Activated CD4-positive, alpha-beta T cell treated with anti-CD3 and anti-CD28 coated beads, Interleukin-2, amount 10 ng/mL, durations not matched to agents 7 days and 5 days (primary cell): ENCODE measurements at regions of chr2 and their contacts with region 1.

Region 1: DNA sequence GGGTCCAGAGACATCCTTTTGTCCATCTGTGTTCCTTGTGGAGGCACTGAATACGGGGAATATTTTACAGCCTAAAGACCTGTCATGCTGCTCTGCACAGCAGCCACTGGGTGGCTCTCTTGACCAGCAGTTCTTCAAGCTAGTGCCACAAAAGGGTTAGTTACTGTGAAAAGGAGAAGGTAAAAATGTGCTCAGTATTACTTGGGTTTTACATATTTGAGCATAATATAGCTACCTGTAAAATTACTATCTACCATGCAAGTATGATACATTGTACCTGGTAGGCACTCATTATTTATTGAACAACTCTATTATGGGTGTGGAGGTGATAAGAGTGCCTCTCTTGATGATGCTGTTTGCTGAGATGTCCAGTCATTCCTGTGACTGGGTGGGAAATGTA is 23.6 kb downstream of the FZD5 start:
- DNase-seq: peak; percentile 67
- H3K4me3 Mint-ChIP-seq: no peak overlapping the region
- H3K27ac Mint-ChIP-seq: no peak overlapping the region
- H3K4me1 Mint-ChIP-seq: peaks cover 1% of the 10 kb centered on the region
- H3K27me3 Mint-ChIP-seq: no peaks in the 10 kb centered on the region

Region 2: DNA sequence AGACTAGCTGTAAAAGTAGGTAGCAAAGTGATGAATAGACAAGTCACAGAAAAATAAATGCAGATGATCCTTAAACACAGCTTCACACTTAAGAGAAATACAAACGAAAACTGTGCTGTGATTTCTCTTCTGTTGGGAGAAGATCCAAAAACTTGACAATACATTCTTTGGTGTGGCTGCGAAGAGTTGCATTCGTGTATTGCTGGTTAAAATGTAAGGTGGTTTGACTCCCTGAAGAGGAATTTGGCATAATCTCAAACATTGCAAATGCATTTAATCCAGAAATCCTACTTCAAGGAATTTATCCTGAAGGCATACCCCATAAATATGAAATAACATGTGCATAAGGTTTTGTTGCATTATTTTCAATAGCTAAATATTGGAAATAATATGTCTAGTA is 27.6 kb before region 1 on chr2:
- CTCF ChIA-PET with region 1: no interaction called
- POLR2A ChIA-PET with region 1: no interaction called
- DNase-seq: no peak
- H3K4me3 Mint-ChIP-seq: no peak overlapping the region
- H3K27ac Mint-ChIP-seq: no peak overlapping the region
- H3K4me1 Mint-ChIP-seq: peaks cover 9% of the 10 kb centered on the region
- H3K27me3 Mint-ChIP-seq: no peaks in the 10 kb centered on the region

Region 3: GRCh38 chr2:207833251-207833751 is 87.2 kb after region 1 on chr2:
- CTCF ChIA-PET with region 1: no interaction called
- POLR2A ChIA-PET with region 1: no interaction called
- DNase-seq: no peak
- H3K4me3 Mint-ChIP-seq: no peak overlapping the region
- H3K27ac Mint-ChIP-seq: no peak overlapping the region
- H3K4me1 Mint-ChIP-seq: peaks cover 28% of the 10 kb centered on the region
- H3K27me3 Mint-ChIP-seq: no peaks in the 10 kb centered on the region

Region 4: GRCh38 chr2:207847807-207848544 is 101.8 kb after region 1 on chr2:
- CTCF ChIA-PET with region 1: no interaction called
- POLR2A ChIA-PET with region 1: no interaction called
- DNase-seq: no peak
- H3K4me3 Mint-ChIP-seq: no peak overlapping the region
- H3K27ac Mint-ChIP-seq: no peak overlapping the region
- H3K4me1 Mint-ChIP-seq: peaks cover 8% of the 10 kb centered on the region
- H3K27me3 Mint-ChIP-seq: no peaks in the 10 kb centered on the region

Region 5: DNA sequence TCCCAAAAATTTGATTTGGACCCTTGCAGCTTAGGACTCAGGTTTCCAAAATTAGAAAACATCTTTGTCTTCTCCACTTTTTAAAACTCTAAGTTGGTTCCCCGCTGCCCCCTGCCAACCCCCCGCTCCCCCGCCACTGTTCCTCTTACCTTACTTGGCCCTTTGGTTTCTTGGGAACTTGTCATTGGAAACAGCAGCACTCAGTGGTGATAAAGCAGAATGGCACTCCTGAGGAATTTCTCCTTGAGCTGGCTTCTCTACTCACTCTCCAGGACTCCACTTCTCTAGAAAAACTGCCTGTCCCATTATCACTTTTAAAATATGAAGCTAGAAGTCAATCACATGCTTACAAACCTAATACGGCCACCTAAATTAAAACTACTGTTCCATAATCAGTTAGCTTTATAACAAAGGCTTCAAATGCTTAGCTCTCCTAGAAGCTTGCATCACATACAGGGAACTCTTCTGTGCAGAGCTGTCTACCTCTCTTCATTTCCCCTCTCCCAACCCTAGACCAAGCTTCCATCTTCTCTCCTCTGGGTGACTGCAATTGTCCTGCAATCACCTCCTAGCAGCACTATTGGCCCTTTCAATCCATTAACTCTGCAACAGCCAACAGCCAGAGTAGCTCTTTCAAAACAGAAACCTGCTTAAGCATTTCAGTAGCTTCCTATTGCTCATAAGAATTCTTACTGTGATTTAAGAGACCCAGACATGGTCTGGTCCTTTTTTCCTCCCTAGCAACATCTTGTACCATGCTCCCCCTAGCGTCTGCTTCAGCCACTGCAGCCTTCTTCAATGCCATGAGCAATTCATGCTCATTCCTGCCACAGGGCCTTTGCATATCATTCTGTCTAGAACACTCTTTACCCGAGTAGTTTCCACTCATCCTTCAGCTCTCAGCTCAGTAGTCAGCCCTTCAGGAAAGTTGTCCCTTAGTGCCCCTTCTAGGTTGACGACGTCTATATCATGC is 294.4 kb after region 1 on chr2:
- CTCF ChIA-PET with region 1: interaction called, 14 read pairs
- POLR2A ChIA-PET with region 1: no interaction called
- DNase-seq: peak; percentile 80
- H3K4me3 Mint-ChIP-seq: no peak overlapping the region
- H3K27ac Mint-ChIP-seq: no peak overlapping the region
- H3K4me1 Mint-ChIP-seq: no peaks in the 10 kb centered on the region
- H3K27me3 Mint-ChIP-seq: no peaks in the 10 kb centered on the region